ENCODE measurements at regions of chr11 and their contacts with region 1.

Region 1: GRCh38 chr11:5808500-5809121 is at the start of gene OR52N2:
- DNase-seq: peak; percentile 72 to 82
- H3K4me3 ChIP-seq: peak within 1 kb of the TSS; percentile 35 to 37
- H3K27ac ChIP-seq: no peak within 1 kb of the TSS
- H3K4me1 ChIP-seq: peaks cover 0 to 9% (median 4%) of the 10 kb centered on the region in 4 donors
- H3K27me3 ChIP-seq: peaks cover 0 to 6% of the 10 kb centered on the region in 2 donors
- CTCF ChIP-seq: peak; percentile 77 to 79

Region 2: DNA sequence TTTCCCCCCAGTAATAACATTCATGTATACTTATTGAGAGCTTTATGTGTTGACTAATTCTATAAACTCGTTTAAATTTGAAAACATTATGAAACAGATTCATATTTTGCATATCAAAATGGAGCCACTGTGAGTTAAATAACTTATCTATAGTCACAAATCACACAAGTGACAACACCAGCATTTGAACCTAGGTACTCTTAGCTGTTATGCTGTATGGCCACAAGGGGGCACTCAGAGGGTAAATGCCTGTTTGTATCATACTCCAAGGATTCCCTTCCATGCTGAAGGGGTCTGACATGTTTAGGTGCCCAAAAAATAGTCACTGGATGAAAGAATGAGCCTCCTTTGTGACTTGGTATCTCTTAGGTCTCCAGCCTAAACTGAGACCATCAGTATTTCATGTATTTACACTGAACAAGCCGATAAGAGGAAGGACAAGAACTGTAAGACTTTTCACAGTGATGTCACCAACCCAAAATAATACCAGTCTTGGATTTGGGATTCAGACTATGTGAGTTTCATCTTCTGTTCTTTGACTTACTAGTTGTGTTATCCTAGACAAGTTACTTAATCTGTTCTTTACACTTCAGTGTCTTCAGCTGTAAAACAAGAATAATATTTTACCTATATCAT is 332.3 kb before region 1 on chr11:
- intact Hi-C with region 1: loop called (anchors 10 kb)
- DNase-seq: no peak
- H3K4me3 ChIP-seq: no peak overlapping the region
- H3K27ac ChIP-seq: no peak overlapping the region
- H3K4me1 ChIP-seq: no peaks in the 10 kb centered on the region
- H3K27me3 ChIP-seq: no peaks in the 10 kb centered on the region
- CTCF ChIP-seq: peak; percentile 60 to 63

Region 3: GRCh38 chr11:5878564-5878963 is 70.0 kb after region 1 on chr11:
- intact Hi-C with region 1: no loop called
- DNase-seq: no peak
- H3K4me3 ChIP-seq: no peak overlapping the region
- H3K27ac ChIP-seq: no peak overlapping the region
- H3K4me1 ChIP-seq: no peaks in the 10 kb centered on the region
- H3K27me3 ChIP-seq: no peaks in the 10 kb centered on the region
- CTCF ChIP-seq: no peak